Psoas muscle (tissue), 8 donors: ENCODE measurements at regions of chr18 and their contacts with region 1.

Region 1: DNA sequence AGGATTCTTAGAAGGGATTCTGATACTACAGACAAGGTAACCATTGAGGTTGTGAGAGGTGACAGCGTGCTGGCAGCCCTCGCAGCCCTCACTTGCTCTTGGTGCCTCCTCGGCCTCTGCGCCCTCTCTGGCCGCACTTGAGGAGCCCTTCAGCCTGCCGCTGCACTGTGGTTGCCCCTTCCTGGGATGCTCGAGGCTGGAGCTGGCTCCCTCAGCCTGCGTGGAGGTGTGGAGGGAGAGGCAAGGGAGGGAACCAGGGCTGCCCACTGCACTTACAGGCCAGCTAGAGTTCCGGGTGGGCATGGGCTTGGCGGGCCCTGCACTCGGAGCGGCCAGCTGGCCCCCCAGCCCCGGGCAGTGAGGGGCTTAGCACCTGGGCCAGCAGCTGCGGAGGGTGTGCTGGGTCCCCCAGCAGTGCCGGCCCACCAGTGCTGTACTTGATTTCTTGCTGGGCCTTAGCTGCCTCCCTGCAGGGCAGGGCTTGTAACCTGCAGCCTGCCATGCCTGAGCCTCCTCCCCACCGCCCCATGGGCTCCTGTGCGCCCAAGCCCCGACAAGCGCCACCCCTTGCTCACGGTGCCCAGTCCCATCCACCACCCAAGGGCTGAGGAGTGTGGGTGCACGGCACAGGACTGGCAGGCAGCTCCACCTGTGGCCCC is 23.9 kb upstream of the RIT2 start:
- DNase-seq: no peak
- ATAC-seq: no peak
- H3K4me3 ChIP-seq: no peak overlapping the region
- H3K27ac ChIP-seq: no peak overlapping the region
- H3K4me1 ChIP-seq: no peaks in the 10 kb centered on the region
- H3K27me3 ChIP-seq: no peaks in the 10 kb centered on the region
- CTCF ChIP-seq: no peak

Region 2: DNA sequence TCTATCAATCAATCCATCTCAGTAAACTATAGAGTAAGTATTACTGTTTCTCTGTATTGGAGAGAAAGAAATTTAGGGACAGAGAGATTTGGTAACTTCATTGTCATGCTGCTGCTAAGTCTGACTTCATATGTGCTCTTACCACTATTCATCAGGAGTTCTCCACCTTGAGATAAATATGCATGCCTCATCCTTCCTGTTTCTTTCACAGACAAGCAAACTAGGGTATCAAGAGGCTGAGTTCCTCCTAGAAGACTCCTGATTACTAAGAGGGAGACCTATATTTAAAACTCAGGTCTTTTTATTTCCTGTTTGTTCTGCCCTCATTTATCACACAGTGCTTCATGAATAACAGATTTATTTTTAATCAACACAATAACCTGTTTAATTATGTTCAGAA is 58.0 kb before region 1 on chr18:
- intact Hi-C with region 1: loop called in 1 of 2 experiments (anchors 5 kb)
- DNase-seq: no peak
- ATAC-seq: no peak
- H3K4me3 ChIP-seq: no peak overlapping the region
- H3K27ac ChIP-seq: no peak overlapping the region
- H3K4me1 ChIP-seq: no peaks in the 10 kb centered on the region
- H3K27me3 ChIP-seq: no peaks in the 10 kb centered on the region
- CTCF ChIP-seq: no peak